Heart left ventricle (tissue), 16 donors: ENCODE measurements at regions of chr10 and their contacts with region 1.

Region 1: DNA sequence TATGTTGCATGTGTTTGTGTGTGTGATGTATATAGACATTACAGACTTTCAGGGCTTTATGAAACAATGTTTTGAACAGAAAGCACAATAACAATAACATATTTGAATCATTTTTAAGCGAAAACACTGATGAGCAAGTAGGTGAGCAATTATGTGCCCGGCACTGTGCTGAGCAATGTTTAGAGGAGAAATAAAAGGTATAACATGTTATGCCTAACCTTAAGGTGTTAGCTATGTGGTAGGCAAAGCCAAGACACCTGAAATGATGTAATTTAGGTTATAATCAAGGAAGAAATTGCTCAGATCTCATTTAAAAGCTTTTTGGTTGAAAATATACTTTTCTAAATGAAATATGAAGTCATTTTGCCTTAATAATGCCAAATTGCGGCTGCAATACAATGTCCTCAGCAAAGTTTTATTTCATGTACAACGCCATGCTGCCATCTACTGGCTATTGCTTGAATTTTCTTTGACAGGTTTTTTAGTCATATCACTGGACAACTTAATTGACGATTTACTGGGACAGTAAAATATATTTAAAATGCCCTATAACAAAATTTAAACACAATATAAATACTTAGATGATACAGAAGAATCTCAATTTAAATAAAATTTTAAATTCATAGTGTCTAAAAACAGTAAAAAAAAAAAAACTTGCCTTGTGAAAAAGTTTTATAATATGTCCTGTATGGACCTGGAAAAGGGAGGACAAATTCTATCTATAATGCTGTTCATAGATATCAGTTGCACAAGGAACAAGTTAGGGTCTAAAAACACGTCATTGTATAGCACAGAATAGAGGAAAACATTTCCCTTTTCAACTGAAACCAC is 131.1 kb upstream of the CDK1 start:
- DNase-seq: peak in 1 of 5 donors; percentile 10
- ATAC-seq: peak in 1 of 4 donors; percentile 53
- H3K4me3 ChIP-seq: no peak overlapping the region
- H3K27ac ChIP-seq: no peak overlapping the region
- H3K4me1 ChIP-seq: peaks cover 0 to 3% (median 0%) of the 10 kb centered on the region in 12 donors
- H3K27me3 ChIP-seq: no peaks in the 10 kb centered on the region
- CTCF ChIP-seq: peak; percentile 64 to 83 (median 76)
- POLR2A ChIP-seq: no peak

Region 2: GRCh38 chr10:60093317-60093716 is 553.9 kb before region 1 on chr10:
- intact Hi-C with region 1: loop called in 5 of 10 experiments (anchors 2 to 10 kb)
- DNase-seq: no peak
- ATAC-seq: no peak
- H3K4me3 ChIP-seq: no peak overlapping the region
- H3K27ac ChIP-seq: no peak overlapping the region
- H3K4me1 ChIP-seq: peaks cover 0 to 4% (median 0%) of the 10 kb centered on the region in 12 donors
- H3K27me3 ChIP-seq: no peaks in the 10 kb centered on the region
- CTCF ChIP-seq: no peak
- POLR2A ChIP-seq: no peak